G401 (cell line): ENCODE measurements at regions of chr15 and their contacts with region 1.

Region 1: DNA sequence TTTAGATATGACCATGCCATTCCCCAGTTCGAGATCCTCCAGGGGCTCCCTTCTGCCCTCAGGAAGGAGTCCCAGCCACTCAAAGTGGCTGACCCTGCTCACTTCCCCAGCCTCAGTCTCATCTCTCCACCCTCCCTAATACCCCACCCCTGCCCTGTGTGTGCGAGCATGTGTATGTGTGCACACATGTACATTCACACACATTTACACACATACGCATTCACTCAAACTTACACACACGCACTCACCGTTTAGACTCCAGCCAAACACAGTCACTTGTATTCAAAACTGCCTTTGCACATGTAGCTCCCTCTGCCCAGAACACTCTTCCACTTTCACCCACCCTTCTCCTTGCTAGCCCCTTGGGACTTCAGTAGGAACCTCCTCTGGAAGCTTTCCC is 11.4 kb downstream of the PLA2G4E start:
- DNase-seq: no peak

Region 2: GRCh38 chr15:41774882-41775417 is 234.5 kb before region 1 on chr15:
- in situ Hi-C with region 1: no loop called
- DNase-seq: peak; percentile 56

Region 3: DNA sequence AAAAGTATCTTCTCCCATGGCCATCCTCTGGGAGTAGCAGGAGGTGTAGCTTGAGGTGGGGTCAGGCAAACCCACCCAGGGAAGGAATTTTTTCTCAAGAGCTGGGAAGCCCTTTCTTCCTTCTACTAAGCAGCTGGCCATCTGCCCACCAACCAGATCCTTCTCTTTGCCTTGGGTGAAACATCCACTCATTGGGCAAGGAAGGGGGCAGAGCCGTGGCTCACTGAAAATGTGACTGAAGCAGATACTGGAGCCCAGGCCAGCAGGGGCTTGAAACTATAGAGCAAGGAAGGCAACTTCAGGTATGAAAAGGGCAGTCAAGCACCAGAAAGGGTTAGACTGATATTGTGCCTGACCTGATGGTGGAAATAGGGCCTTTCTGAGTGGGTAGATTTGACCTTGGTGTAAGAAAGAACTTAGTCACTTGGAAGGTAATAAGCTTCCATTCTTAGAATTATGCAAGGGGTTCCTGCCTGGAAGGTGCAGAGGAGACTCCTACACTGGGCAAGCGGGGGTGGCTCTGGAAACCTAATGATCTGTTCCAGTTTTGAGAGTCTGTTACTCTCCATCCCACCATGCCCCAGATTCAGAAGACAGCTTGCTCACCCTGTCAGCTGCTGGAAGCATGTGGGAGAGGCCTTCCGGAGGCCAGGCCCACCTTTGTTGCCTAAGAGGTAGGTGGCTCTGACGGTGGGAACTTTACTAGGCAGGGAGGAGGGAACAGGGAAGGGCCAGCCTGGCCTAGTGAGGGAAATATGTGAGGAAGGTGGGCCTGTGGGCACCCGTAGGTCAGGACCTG is 33.3 kb after region 1 on chr15:
- in situ Hi-C with region 1: loop called (anchors 5 kb)
- DNase-seq: no peak

Region 4: GRCh38 chr15:42107473-42107872 is 98.0 kb after region 1 on chr15:
- in situ Hi-C with region 1: no loop called
- DNase-seq: no peak